Activated T-helper 1 cell treated with anti-CD3 and anti-CD28 coated beads, Interleukin-12 subunit alpha, Interleukin-12 subunit beta, Interleukin-2, Interleukin-4 antibody, amounts not matched to agents 30 ng/mL and 10 ng/mL and 1 ng/mL, durations not matched to agents 14 hours and 24 hours and 36 hours (primary cell): ENCODE measurements at regions of chr6 and their contacts with region 1.

Region 1: GRCh38 chr6:40328405-40328987 is 258.7 kb downstream of the LRFN2 start:
- DNase-seq: peak; percentile 42
- H3K4me3 Mint-ChIP-seq: no peak overlapping the region
- H3K27ac Mint-ChIP-seq: peak overlapping the region; percentile 33
- H3K4me1 Mint-ChIP-seq: peaks cover 44% of the 10 kb centered on the region
- H3K27me3 Mint-ChIP-seq: peaks cover 10% of the 10 kb centered on the region

Region 2: DNA sequence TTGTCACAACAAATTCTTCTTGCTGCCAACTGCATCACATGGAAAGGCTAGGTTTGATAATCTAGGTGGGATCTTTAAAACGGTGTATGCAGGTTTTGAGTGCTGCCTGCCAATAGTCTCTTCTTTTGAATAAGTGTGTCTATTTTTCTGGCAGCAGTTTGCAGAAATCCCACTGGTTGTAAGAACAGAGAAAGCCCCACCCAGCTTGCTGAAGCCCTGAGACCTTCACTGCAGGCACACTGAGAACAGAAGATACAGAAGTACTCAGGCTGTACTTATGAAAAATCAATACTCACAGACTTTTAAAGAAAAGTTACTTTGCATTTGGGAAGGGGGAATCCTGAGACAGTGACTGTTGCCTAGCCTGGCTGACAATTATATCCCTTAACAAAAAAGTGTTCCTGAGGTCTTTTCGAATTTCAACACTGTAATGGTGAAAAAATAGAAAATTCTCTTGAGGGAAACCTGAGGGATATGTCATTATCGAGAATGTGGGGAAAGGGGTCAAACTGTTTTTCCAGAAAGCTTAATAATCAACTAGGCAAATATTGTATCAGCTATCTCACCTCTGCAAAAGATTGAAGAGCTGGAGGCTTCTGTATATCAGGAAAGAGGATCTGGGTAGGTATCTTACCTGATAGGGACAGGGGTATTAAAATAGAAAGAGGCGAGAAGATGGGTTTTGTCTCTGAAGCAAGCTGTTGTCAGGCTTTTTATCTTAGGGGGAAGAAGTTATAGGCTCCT is 58.8 kb after region 1 on chr6:
- intact Hi-C with region 1: loop called (anchors 2 kb)
- DNase-seq: no peak
- H3K4me3 Mint-ChIP-seq: peak overlapping the region; percentile 20
- H3K27ac Mint-ChIP-seq: peak overlapping the region; percentile 67
- H3K4me1 Mint-ChIP-seq: peaks cover 67% of the 10 kb centered on the region
- H3K27me3 Mint-ChIP-seq: no peaks in the 10 kb centered on the region

Region 3: GRCh38 chr6:40506954-40507353 is 178.5 kb after region 1 on chr6:
- intact Hi-C with region 1: loop called (anchors 10 kb)
- DNase-seq: no peak
- H3K4me3 Mint-ChIP-seq: no peak overlapping the region
- H3K27ac Mint-ChIP-seq: no peak overlapping the region
- H3K4me1 Mint-ChIP-seq: peaks cover 26% of the 10 kb centered on the region
- H3K27me3 Mint-ChIP-seq: peaks cover 9% of the 10 kb centered on the region

Region 4: GRCh38 chr6:40819182-40819834 is 490.8 kb after region 1 on chr6:
- intact Hi-C with region 1: loop called (anchors 1 kb)
- DNase-seq: no peak
- H3K4me3 Mint-ChIP-seq: no peak overlapping the region
- H3K27ac Mint-ChIP-seq: no peak overlapping the region
- H3K4me1 Mint-ChIP-seq: no peaks in the 10 kb centered on the region
- H3K27me3 Mint-ChIP-seq: peaks cover 9% of the 10 kb centered on the region

Region 5: DNA sequence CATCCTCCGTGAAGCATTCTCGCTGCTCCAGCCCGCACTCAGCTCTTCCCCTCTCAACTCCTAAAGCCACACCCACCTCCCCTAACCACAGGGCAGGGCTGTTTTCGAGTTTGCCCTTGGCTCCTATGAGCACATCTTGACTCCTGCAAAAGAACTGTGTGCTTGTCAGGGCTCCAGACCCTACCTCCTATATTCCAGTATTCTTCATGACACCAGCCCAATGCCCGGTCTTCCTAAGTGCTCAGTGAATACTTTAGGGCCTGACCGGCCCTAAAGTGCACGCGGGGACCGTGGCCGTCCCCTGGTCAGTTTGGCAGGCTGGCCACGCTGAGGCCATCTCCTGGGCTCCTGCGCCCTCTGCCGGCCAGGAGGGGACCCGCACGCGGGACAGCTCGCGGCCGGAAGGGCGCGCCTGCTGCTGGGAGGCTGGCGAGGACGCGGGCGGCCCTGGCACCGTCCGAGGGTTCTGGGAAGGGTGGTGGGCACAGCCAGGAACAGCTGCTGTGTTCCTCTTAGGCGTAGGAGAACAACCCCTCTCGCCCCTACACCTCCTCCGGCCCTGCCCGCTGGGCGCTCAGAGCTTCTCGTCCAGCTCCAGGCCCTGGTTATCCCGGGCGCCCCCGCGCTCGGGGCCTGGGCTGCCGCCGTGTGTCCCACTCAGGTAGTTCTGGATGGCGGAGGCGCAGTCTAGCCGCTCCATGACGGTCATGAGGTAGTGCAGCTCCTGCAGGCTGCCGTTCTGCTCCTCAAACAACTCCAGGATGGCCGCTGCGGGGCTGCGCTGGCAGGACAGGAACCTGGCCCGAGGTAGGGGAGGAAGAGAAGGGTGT is 699.5 kb after region 1 on chr6:
- intact Hi-C with region 1: loop called (anchors 5 kb)
- DNase-seq: peak; percentile 77
- H3K4me3 Mint-ChIP-seq: peak overlapping the region; percentile 89
- H3K27ac Mint-ChIP-seq: peak overlapping the region; percentile 85
- H3K4me1 Mint-ChIP-seq: peaks cover 22% of the 10 kb centered on the region
- H3K27me3 Mint-ChIP-seq: no peaks in the 10 kb centered on the region